ENCODE measurements at regions of chr4 and their contacts with region 1.

Region 1: DNA sequence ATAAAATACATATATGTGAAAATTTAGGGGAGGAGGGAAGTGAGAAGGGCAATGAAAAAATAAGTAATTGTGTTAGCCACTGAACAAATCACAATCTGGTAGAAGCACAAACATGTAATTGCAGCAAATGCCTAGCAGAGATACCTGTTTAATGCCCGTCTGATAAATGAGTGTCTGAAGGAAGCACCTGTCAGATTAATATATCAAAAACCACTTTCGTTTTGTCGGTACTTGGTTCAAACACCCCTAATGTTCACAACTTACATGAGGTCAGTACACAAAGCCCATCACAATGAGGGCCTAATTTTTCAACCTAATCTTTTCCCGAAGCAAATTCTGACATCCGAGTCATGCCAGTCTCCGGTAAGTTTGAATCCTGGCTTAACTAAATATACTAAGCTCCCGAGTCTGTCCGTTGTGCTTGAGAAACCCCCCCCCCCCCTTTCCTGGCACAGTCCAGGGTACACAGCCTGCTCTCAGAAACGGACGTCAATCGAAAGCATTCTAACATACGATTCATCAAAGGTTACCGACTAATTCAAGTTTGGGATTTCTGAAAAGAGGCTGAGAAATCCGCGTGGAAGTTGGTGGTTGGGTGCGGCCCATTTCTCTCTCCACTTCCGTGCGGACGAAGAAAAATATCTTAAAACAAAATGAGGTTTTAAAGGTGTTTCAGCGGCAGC is 758 bp downstream of the SDAD1 start:
- DNase-seq: no peak
- H3K4me3 ChIP-seq: peak overlapping the region; percentile 77
- H3K27me3 ChIP-seq: no peaks in the 10 kb centered on the region; the same call in 1 of the 2 replicates
- CTCF ChIP-seq: no peak

Region 2: DNA sequence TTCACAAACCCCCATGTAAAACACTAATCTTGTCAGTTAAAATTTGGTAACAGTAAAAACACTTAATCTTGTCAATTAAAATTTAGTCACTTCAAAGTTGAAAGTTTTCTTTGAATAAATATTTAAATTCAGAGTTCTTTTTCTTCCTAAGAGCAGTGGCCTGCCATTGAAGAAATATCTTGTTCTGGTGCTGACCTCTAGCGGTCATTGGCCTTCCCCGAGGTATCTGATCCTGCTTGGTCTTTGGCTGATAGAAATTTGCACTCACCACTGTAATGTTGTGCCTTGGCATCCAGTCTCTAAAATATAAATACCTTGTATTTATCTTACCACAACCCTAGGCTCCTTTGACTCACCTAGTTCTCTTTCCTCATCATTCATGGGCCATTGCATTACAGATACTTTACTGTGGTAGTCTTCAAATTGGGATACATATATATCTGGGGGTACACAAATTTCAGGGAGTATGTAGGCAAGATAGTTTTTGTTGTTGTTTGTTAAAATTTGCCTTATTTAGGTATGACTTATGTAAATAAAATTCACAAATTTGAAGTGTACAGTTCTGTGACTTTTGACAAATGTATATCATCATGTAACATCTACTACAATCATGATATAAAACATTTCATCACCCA is 77.8 kb after region 1 on chr4:
- CTCF ChIA-PET with region 1: interaction called, 23 read pairs
- POLR2A ChIA-PET with region 1: no interaction called
- DNase-seq: peak; percentile 9
- H3K4me3 ChIP-seq: no peak overlapping the region
- H3K27me3 ChIP-seq: 0 out of 2 replicates have a peak, but pooled peaks cover 1% of the 10 kb centered on the region
- CTCF ChIP-seq: peak; percentile 83

Measured in BJ (cell line).